ENCODE measurements at regions of chr12 and their contacts with region 1.

Region 1: DNA sequence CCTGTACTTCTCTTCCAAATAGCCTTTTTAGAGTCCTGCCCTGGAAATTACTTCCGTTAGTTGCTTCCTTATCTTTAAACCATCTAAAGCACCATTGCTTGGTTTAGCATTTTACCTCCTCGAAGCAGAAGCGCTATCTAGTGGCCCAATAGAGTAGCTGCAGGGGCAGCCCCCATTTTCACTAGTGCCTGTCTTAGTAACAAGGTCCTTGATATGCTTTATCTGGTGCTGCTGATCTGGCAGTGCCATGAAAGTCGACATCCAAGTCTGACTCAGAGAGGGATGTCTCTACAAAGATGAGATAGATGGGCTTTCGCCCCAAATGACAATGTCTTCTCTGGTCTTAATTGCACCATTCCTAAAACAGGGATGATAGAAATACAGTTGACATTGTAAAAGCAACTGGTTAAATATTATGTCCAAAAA is 25.0 kb upstream of the CIT start:
- DNase-seq: peak; percentile 84
- ATAC-seq: peak; percentile 96
- H3K4me3 ChIP-seq: no peak overlapping the region
- H3K27ac ChIP-seq: no peak overlapping the region
- H3K4me1 ChIP-seq: no peaks in the 10 kb centered on the region
- H3K27me3 ChIP-seq: no peaks in the 10 kb centered on the region
- CTCF ChIP-seq: peak; percentile 95

Region 2: GRCh38 chr12:119423285-119423684 is 478.8 kb before region 1 on chr12:
- CTCF ChIA-PET with region 1: no interaction called
- POLR2A ChIA-PET with region 1: no interaction called
- intact Hi-C with region 1: no loop called
- DNase-seq: no peak
- ATAC-seq: no peak
- H3K4me3 ChIP-seq: no peak overlapping the region
- H3K27ac ChIP-seq: no peak overlapping the region
- H3K4me1 ChIP-seq: no peaks in the 10 kb centered on the region
- H3K27me3 ChIP-seq: peaks cover 16% of the 10 kb centered on the region; the same call in 1 of the 2 replicates
- CTCF ChIP-seq: no peak

Region 3: GRCh38 chr12:119659289-119659897 is 242.7 kb before region 1 on chr12:
- CTCF ChIA-PET with region 1: no interaction called
- POLR2A ChIA-PET with region 1: no interaction called
- intact Hi-C with region 1: loop called (anchors 5 kb)
- DNase-seq: peak; percentile 71
- ATAC-seq: peak; percentile 45
- H3K4me3 ChIP-seq: no peak overlapping the region
- H3K27ac ChIP-seq: no peak overlapping the region
- H3K4me1 ChIP-seq: no peaks in the 10 kb centered on the region
- H3K27me3 ChIP-seq: 0 out of 2 replicates have a peak, but pooled peaks cover 5% of the 10 kb centered on the region
- CTCF ChIP-seq: peak; percentile 88

Region 4: DNA sequence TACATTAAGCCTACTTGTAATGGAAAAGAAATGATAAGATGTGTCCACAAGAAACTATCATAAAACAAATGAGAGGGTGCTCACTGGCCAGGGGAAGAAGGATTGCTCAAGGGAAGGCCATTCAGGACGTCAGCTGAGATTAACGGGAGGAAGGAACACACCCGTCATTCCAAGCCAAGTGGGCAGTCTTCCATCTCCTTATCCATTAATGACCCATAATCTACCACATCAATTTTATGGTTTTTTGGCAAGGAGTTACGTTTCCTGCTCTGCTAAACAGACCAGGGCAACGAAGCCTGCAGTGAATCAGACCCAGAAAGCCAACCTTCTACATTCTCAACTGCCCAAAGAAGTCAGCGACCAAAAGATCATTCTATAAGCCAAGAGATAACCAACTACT is 209.1 kb before region 1 on chr12:
- CTCF ChIA-PET with region 1: interaction called, 3 read pairs
- POLR2A ChIA-PET with region 1: no interaction called
- intact Hi-C with region 1: loop called (anchors 2 kb)
- DNase-seq: peak; percentile 98
- ATAC-seq: peak; percentile 97
- H3K4me3 ChIP-seq: no peak overlapping the region
- H3K27ac ChIP-seq: peak overlapping the region; percentile 75
- H3K4me1 ChIP-seq: peaks cover 19% of the 10 kb centered on the region
- H3K27me3 ChIP-seq: no peaks in the 10 kb centered on the region
- CTCF ChIP-seq: no peak

Region 5: GRCh38 chr12:119749666-119750065 is 152.4 kb before region 1 on chr12:
- CTCF ChIA-PET with region 1: no interaction called
- POLR2A ChIA-PET with region 1: no interaction called
- intact Hi-C with region 1: no loop called
- DNase-seq: no peak
- ATAC-seq: no peak
- H3K4me3 ChIP-seq: no peak overlapping the region
- H3K27ac ChIP-seq: no peak overlapping the region
- H3K4me1 ChIP-seq: no peaks in the 10 kb centered on the region
- H3K27me3 ChIP-seq: no peaks in the 10 kb centered on the region
- CTCF ChIP-seq: no peak

Region 6: DNA sequence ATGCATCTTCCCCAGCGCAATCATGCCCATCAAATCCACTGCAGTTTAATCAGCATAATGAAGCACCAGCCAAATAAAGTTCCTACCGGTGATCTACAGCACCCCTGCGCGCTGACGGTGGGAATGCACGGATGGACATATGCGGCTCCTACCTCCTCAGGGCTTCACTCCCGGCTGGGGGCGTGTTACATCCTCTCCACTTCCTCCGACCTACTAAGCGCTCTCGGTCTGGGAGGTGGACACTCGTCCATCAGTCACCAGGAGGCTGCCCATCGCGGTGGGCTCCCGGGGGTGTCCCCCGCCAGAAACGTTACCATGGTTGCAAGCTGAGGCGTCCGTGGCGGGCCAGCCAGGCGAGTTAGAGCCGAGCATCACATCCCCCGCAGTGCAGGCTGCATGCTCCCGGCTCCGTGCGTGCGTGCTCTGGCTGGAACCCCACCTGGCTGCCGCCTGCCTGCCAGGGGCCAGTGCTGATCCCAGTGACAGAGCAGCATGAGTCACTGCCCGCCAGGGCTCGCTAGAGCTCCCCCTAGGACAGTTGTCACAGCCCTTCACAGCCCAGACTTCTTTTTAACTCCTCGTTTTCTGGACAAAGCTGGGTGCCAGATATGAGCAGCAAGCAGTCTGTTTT is 98.0 kb before region 1 on chr12:
- CTCF ChIA-PET with region 1: interaction called, 4 read pairs
- POLR2A ChIA-PET with region 1: no interaction called
- intact Hi-C with region 1: loop called (anchors 1 kb)
- DNase-seq: peak; percentile 87
- ATAC-seq: peak; percentile 94
- H3K4me3 ChIP-seq: no peak overlapping the region
- H3K27ac ChIP-seq: no peak overlapping the region
- H3K4me1 ChIP-seq: peaks cover 30% of the 10 kb centered on the region
- H3K27me3 ChIP-seq: no peaks in the 10 kb centered on the region
- CTCF ChIP-seq: peak; percentile 86

Region 7: GRCh38 chr12:119885549-119885948 is 16.5 kb before region 1 on chr12:
- CTCF ChIA-PET with region 1: interaction called, 10 read pairs
- POLR2A ChIA-PET with region 1: no interaction called
- intact Hi-C with region 1: no loop called
- DNase-seq: no peak
- ATAC-seq: peak; percentile 39; the same call in 1 of the 2 replicates
- H3K4me3 ChIP-seq: no peak overlapping the region
- H3K27ac ChIP-seq: no peak overlapping the region
- H3K4me1 ChIP-seq: no peaks in the 10 kb centered on the region; the same call in 1 of the 2 replicates
- H3K27me3 ChIP-seq: no peaks in the 10 kb centered on the region
- CTCF ChIP-seq: no peak

Measured in PC-3 (cell line).